ENCODE measurements at regions of chr12 and their contacts with region 1.

Region 1: GRCh38 chr12:62983599-62984022 is 48.7 kb upstream of the PPM1H start:
- DNase-seq: peak in 2 of 10 donors; percentile 16 to 46
- H3K4me3 ChIP-seq: no peak overlapping the region
- H3K27ac ChIP-seq: no peak overlapping the region
- H3K27me3 ChIP-seq: no peaks in the 10 kb centered on the region
- CTCF ChIP-seq: peak in 50 of 56 donors; percentile 18 to 66 (median 38)

Region 2: GRCh38 chr12:62069976-62070375 is 913.6 kb before region 1 on chr12:
- intact Hi-C with region 1: no loop called
- DNase-seq: no peak
- H3K4me3 ChIP-seq: no peak overlapping the region
- H3K27ac ChIP-seq: no peak overlapping the region
- H3K27me3 ChIP-seq: no peaks in the 10 kb centered on the region
- CTCF ChIP-seq: no peak

Region 3: GRCh38 chr12:62848421-62848820 is 135.2 kb before region 1 on chr12:
- intact Hi-C with region 1: loop called in 1 of 2 experiments (anchors 2 kb)
- DNase-seq: no peak
- H3K4me3 ChIP-seq: no peak overlapping the region
- H3K27ac ChIP-seq: peak overlapping the region in 16 of 59 donors; percentile 4 to 61 (median 30)
- H3K27me3 ChIP-seq: no peaks in the 10 kb centered on the region
- CTCF ChIP-seq: no peak

Region 4: DNA sequence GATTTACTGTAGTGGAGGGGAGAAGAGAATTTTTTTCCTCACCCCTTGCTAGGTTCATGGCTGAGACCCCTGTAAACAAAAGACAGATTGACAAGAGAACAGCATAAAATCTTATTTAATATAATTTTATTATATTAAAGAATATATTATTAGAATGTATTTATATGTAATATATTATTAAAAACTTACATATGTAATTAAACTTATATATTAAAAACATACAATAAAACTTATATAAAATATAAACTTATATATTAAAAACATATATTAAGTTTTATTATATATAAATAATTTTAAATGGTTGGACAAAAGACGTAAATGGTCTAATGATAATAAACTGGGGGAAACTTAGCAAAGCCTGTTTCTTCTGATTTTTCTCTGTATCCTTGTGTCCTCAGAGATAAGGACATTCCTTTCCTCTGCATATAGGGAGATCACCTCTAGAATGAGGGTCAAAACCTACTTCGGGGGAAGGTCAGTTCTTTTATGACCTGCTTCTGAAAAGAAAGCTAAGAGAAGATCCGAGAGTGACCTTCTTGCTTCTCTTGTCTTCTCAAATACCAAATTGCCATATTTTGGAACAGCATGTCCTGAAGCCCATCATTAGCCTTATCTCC is 39.7 kb before region 1 on chr12:
- intact Hi-C with region 1: loop called in 1 of 2 experiments (anchors 2 kb)
- DNase-seq: no peak
- H3K4me3 ChIP-seq: no peak overlapping the region
- H3K27ac ChIP-seq: peak overlapping the region in 13 of 59 donors; percentile 1 to 41 (median 24)
- H3K27me3 ChIP-seq: no peaks in the 10 kb centered on the region
- CTCF ChIP-seq: no peak

Region 5: DNA sequence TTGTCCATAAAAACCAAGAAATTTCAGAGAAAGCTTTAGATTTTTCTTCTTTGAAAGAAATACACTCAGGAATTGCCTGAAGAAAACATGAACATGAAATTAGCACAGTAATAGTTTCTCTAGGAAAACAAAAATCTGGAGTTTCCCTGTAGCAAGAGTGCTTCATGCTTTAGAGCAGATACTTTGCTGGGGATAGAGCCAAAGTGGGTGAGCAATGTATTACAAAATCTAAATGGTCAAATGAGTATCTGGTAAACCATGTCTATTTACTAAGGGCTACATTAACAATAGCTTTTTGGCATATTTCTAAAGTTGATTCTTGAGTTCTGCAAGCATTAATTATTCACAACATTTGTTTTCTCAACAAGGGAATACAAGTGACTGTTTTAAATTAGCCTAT is 141.2 kb after region 1 on chr12:
- intact Hi-C with region 1: no loop called
- DNase-seq: no peak
- H3K4me3 ChIP-seq: no peak overlapping the region
- H3K27ac ChIP-seq: no peak overlapping the region
- H3K27me3 ChIP-seq: peaks cover 0 to 7% (median 0%) of the 10 kb centered on the region in 45 donors
- CTCF ChIP-seq: no peak

Measured in dorsolateral prefrontal cortex (tissue), 120 donors.